ENCODE measurements at regions of chr6 and their contacts with region 1.

Region 1: DNA sequence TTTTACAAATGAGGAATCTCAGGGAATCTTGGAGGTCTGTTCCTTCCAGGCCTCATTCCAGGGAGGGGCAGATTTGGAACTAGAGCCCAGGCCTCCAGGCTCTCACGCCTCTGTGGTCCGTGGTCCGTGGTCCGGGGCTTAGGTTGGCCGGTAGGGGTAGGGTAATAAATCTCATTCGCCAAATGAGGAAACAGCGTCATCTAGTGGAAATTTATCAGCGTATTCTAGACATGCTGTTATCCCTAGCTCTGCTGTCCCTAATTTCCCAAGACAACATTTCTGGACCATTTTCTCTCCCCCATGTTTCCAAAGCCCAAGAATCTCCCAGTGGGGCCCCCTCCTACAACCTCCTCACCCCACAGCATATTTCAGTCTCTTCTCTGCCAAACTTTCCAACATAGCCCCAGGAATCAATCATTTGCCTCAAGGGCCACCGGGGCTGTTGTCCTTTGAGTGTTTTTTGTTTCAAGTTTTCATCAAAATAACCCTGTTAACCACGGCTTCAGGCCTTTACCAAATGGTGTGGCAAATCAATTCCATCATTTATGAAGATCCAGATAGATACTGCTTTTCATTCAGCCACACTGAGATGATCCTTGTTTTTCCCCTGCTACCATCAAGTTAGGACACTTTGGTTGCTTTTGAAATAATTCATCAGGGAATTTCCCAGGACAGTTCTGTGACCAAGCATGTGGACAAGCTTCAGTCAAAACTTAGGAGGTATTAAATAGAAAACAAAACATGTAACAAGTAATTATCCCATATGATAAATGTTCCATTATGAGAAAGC is 126.8 kb downstream of the ALDH8A1 start:
- DNase-seq: no peak
- H3K4me3 ChIP-seq: no peak overlapping the region
- H3K27me3 ChIP-seq: no peaks in the 10 kb centered on the region
- CTCF ChIP-seq: peak; percentile 84

Region 2: DNA sequence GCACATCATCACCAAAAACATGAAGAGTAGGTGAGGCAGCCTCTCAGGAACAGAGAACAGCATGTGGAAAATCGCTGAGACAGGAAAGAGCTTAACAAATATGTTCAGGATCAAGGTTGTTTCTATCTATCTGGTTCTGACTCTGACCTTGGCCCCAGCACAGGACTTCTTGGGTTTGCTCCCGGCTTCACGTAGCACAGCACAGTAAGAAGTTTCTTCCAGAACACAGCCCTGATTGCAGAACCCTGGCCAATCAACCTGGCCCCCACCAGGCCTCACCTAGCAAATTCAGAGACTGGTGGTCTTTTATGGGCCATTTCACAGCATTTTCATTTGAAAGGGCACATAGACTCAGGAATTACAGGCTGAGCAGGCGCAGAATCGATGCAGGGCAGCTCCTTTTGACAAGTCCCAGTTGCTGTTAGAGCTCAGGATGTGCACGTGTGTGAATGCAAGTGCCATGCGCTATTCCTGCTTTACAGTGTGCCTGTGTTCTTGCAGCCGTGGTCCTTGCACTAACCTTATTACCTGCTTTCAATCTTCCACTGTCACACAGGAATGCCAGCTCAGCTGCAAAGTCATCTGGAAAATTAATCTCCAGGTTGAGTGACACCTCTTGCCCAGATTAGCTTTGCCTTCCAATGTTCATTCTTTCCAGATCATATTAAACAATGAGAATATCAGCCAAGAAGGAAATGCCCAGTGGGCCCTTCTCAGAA is 670.2 kb before region 1 on chr6:
- CTCF ChIA-PET with region 1: interaction called, 23 read pairs
- POLR2A ChIA-PET with region 1: no interaction called
- DNase-seq: no peak
- H3K4me3 ChIP-seq: no peak overlapping the region
- H3K27me3 ChIP-seq: no peaks in the 10 kb centered on the region
- CTCF ChIP-seq: no peak

Region 3: DNA sequence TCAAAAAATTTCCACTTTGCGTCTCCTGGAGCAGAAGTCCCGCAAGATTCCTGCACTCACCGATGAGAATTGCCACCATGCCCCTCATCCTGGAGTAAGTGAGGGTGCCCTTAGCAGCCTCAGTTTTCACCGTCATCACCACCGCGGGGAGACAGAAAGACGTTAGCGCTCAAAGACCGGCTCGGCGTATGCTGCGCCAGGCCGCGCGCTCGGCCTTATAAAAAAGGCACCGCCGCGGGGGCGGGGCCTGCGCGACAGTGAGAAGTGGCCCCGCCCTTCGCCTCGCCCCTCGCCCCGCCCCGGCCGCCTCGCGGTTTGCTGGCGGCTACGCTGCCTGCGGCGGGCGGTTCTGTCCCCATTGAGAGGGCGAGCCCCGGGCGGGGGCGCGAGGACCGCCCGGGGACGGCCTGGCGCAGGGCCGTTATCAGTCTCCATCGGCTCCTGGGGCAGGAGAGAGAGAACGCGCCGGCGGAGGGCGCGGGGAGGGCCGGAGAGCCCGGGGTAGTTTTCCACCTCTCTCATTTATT is 648.4 kb before region 1 on chr6:
- CTCF ChIA-PET with region 1: interaction called, 15 read pairs
- POLR2A ChIA-PET with region 1: no interaction called
- DNase-seq: peak; percentile 38
- H3K4me3 ChIP-seq: peak overlapping the region; percentile 79
- H3K27me3 ChIP-seq: no peaks in the 10 kb centered on the region
- CTCF ChIP-seq: 0 out of 2 replicates have a peak, but pooled peaks have one; percentile 2

Region 4: DNA sequence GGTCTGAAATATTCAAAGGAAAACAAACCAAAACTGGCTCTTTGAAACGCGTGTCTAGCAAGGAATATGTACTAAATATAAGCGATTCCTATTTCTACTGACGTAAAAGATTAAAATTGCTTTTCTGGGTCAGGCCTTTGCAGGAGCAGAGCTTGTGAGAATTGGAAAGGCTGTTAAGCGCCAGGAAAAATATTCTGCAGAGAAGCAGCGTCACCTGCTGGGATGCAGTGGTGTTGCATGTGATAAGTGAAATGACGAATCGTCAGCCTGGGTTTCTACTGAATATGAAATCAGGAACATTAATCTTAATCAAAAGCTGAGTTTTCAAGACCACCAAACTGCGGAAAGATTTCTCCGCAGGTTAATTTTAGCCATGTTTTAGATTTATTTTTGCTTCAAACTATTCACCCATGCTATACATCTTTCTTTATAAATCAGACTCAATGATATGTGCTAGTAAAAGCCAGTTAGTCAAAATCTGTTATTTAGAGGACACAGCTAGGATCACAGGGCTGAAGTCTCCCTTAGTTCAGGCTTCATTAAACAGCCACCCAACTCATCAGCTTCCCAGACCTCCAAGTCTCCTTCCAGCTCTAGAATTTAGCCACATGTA is 59.4 kb after region 1 on chr6:
- CTCF ChIA-PET with region 1: interaction called, 17 read pairs
- POLR2A ChIA-PET with region 1: no interaction called
- DNase-seq: no peak
- H3K4me3 ChIP-seq: no peak overlapping the region
- H3K27me3 ChIP-seq: no peaks in the 10 kb centered on the region
- CTCF ChIP-seq: peak; percentile 83

Measured in BJ (cell line).